Thyroid gland (tissue), 4 donors: ENCODE measurements at regions of chr12 and their contacts with region 1.

Region 1: GRCh38 chr12:17853054-17853453 is 236.9 kb downstream of the RERGL start:
- DNase-seq: no peak
- H3K4me3 ChIP-seq: no peak overlapping the region
- H3K27ac ChIP-seq: no peak overlapping the region
- H3K4me1 ChIP-seq: no peaks in the 10 kb centered on the region
- H3K27me3 ChIP-seq: no peaks in the 10 kb centered on the region
- CTCF ChIP-seq: no peak
- POLR2A ChIP-seq: no peak

Region 2: DNA sequence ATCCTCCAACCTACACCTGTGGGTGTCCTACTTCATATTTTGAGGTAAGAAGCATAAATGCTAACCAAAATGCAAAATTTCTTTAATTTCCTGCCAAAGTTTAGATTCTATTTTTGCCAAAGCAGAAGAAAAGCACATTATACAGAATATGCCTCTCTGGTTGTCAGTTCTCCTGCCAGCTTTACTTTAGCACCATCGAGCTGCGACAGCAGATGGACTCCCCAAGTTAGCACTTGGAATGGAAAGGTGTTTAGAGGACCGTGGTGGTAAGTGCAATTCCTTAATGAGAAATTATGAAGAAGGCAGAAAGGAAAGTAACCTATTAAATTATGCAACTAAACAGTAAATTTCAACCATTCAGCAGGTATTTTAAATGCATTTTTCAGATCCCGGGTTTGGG is 89.7 kb before region 1 on chr12:
- intact Hi-C with region 1: loop called (anchors 5 kb)
- DNase-seq: no peak
- H3K4me3 ChIP-seq: no peak overlapping the region
- H3K27ac ChIP-seq: no peak overlapping the region
- H3K4me1 ChIP-seq: no peaks in the 10 kb centered on the region
- H3K27me3 ChIP-seq: no peaks in the 10 kb centered on the region
- CTCF ChIP-seq: no peak
- POLR2A ChIP-seq: no peak

Region 3: GRCh38 chr12:18204053-18204452 is 351.0 kb after region 1 on chr12:
- intact Hi-C with region 1: no loop called
- DNase-seq: no peak
- H3K4me3 ChIP-seq: no peak overlapping the region
- H3K27ac ChIP-seq: no peak overlapping the region
- H3K4me1 ChIP-seq: no peaks in the 10 kb centered on the region
- H3K27me3 ChIP-seq: no peaks in the 10 kb centered on the region
- CTCF ChIP-seq: no peak
- POLR2A ChIP-seq: no peak